ENCODE measurements at regions of chr14 and their contacts with region 1.

Region 1: GRCh38 chr14:77000340-77001270 is 27.9 kb downstream of the IRF2BPL start:
- DNase-seq: peak; percentile 39
- H3K4me3 Mint-ChIP-seq: peak overlapping the region; percentile 23
- H3K27ac Mint-ChIP-seq: peak overlapping the region; percentile 85
- H3K4me1 Mint-ChIP-seq: peaks cover 24% of the 10 kb centered on the region
- H3K27me3 Mint-ChIP-seq: no peaks in the 10 kb centered on the region

Region 2: GRCh38 chr14:76985540-76986230 is 14.9 kb before region 1 on chr14:
- CTCF ChIA-PET with region 1: interaction called, 10 read pairs
- POLR2A ChIA-PET with region 1: no interaction called
- DNase-seq: no peak
- H3K4me3 Mint-ChIP-seq: no peak overlapping the region
- H3K27ac Mint-ChIP-seq: no peak overlapping the region
- H3K4me1 Mint-ChIP-seq: peaks cover 23% of the 10 kb centered on the region
- H3K27me3 Mint-ChIP-seq: no peaks in the 10 kb centered on the region

Region 3: GRCh38 chr14:77014004-77014604 is 13.5 kb after region 1 on chr14:
- CTCF ChIA-PET with region 1: interaction called, 23 read pairs
- POLR2A ChIA-PET with region 1: no interaction called
- DNase-seq: no peak
- H3K4me3 Mint-ChIP-seq: no peak overlapping the region
- H3K27ac Mint-ChIP-seq: no peak overlapping the region
- H3K4me1 Mint-ChIP-seq: peaks cover 14% of the 10 kb centered on the region
- H3K27me3 Mint-ChIP-seq: no peaks in the 10 kb centered on the region

Region 4: DNA sequence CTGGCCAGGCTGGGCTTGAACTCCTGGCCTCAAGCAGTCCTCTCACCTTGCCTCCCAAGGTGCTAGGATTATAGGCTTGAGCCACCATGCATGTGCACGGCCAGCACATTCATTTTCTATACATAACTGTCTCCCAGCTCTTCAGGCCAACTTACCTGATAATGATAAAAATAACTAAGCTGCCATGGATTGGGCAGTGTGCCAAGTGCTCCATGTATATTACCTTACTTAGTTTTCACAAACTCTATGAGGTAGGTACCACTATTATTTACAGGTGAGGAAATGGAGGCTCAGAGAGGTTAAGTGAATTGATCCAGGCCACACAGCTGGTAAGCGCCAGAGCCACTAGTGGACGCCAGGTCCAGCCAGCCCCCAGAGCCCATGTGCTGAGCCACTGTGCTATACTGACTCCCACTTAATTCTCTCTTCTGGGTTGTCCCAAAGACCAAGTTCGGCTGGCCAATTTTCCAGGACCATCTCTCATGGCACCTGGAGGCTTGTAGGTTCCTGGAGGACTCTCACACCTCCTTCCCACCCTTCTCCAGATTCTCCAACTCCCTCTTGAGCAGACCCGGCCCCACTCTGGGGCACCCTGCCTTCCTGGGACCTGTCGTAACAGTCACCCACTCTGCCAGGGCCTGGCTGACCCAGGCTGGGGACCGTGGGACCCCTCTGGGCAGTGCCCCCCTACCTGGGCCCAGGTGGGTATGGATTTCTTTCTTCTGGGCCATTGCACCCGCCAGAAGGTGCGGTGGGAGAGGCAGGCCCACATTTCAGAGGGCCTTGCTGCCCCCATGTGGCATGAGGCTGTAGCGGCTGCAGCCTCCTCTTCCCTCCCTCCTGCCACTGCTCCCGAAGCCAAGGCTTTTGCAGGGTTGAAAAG is 67.3 kb after region 1 on chr14:
- CTCF ChIA-PET with region 1: no interaction called
- POLR2A ChIA-PET with region 1: no interaction called
- DNase-seq: peak; percentile 61
- H3K4me3 Mint-ChIP-seq: no peak overlapping the region
- H3K27ac Mint-ChIP-seq: no peak overlapping the region
- H3K4me1 Mint-ChIP-seq: peaks cover 2% of the 10 kb centered on the region
- H3K27me3 Mint-ChIP-seq: peaks cover 5% of the 10 kb centered on the region